Mammary epithelial cell (primary cell): ENCODE measurements at regions of chr11 and their contacts with region 1.

Region 1: GRCh38 chr11:101436511-101437142 is 147.2 kb downstream of the TRPC6 start:
- DNase-seq: peak; percentile 14
- H3K4me3 ChIP-seq: no peak overlapping the region
- H3K27ac ChIP-seq: no peak overlapping the region
- H3K4me1 ChIP-seq: peaks cover 8% of the 10 kb centered on the region
- H3K27me3 ChIP-seq: no peaks in the 10 kb centered on the region
- CTCF ChIP-seq: peak; percentile 79 to 85

Region 2: DNA sequence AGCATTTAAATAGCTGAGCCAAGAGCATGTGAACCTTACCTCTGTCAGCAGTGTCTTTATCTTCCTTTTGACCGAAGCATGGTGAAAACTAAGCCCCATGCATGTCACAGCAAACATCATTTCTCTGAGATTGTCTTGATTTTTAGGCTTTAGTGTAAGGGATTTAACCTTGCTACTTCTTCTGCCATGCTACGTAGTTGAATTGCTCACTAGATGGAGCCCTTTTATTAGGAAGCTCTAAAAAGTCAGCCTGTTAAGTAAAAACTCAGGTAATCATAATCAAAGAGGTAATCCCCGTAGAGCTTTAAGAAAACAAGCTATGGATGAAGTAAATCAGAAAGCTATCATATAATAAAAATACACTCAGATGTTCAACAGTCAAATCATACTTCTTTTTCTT is 456.5 kb before region 1 on chr11:
- CTCF ChIA-PET with region 1: no interaction called
- dilution Hi-C with region 1: no loop called
- in situ Hi-C with region 1: no loop called
- intact Hi-C with region 1: loop called (anchors 1 kb)
- DNase-seq: no peak
- H3K4me3 ChIP-seq: no peak overlapping the region
- H3K27ac ChIP-seq: no peak overlapping the region
- H3K4me1 ChIP-seq: no peaks in the 10 kb centered on the region
- H3K27me3 ChIP-seq: no peaks in the 10 kb centered on the region
- CTCF ChIP-seq: peak; percentile 15 to 45

Region 3: GRCh38 chr11:101390539-101390938 is 46.1 kb before region 1 on chr11:
- CTCF ChIA-PET with region 1: interaction called, 3 read pairs
- dilution Hi-C with region 1: no loop called
- in situ Hi-C with region 1: no loop called
- intact Hi-C with region 1: loop called (anchors 1 kb)
- DNase-seq: no peak
- H3K4me3 ChIP-seq: no peak overlapping the region
- H3K27ac ChIP-seq: no peak overlapping the region
- H3K4me1 ChIP-seq: no peaks in the 10 kb centered on the region
- H3K27me3 ChIP-seq: no peaks in the 10 kb centered on the region
- CTCF ChIP-seq: peak; percentile 18 to 39

Region 4: GRCh38 chr11:101478587-101479369 is 42.2 kb after region 1 on chr11:
- CTCF ChIA-PET with region 1: no interaction called
- dilution Hi-C with region 1: no loop called
- in situ Hi-C with region 1: no loop called
- intact Hi-C with region 1: no loop called
- DNase-seq: peak; percentile 73
- H3K4me3 ChIP-seq: no peak overlapping the region
- H3K27ac ChIP-seq: no peak overlapping the region
- H3K4me1 ChIP-seq: peaks cover 10% of the 10 kb centered on the region
- H3K27me3 ChIP-seq: no peaks in the 10 kb centered on the region
- CTCF ChIP-seq: no peak

Region 5: GRCh38 chr11:101797335-101797734 is 360.7 kb after region 1 on chr11:
- CTCF ChIA-PET with region 1: no interaction called
- dilution Hi-C with region 1: no loop called
- in situ Hi-C with region 1: no loop called
- intact Hi-C with region 1: no loop called
- DNase-seq: no peak
- H3K4me3 ChIP-seq: no peak overlapping the region
- H3K27ac ChIP-seq: no peak overlapping the region
- H3K4me1 ChIP-seq: no peaks in the 10 kb centered on the region
- H3K27me3 ChIP-seq: no peaks in the 10 kb centered on the region
- CTCF ChIP-seq: no peak

Region 6: GRCh38 chr11:102047305-102047924 is 610.8 kb after region 1 on chr11 and contains the start of gene CFAP300:
- CTCF ChIA-PET with region 1: no interaction called
- dilution Hi-C with region 1: no loop called
- in situ Hi-C with region 1: no loop called
- intact Hi-C with region 1: no loop called
- DNase-seq: peak; percentile 43
- H3K4me3 ChIP-seq: peak within 1 kb of the TSS; percentile 66 to 85 (median 72)
- H3K27ac ChIP-seq: peak within 1 kb of the TSS; percentile 65
- H3K4me1 ChIP-seq: peaks cover 15% of the 10 kb centered on the region
- H3K27me3 ChIP-seq: no peaks in the 10 kb centered on the region
- CTCF ChIP-seq: no peak
- total RNA-seq, gene CFAP300: 4.3 to 6.4 TPM